Activated T-helper 2 cell treated with anti-CD3 and anti-CD28 coated beads, Interferon-gamma antibody, Interleukin-2, Interleukin-4, amounts not matched to agents 10 μg/mL and 5 μg/mL and 100 μg/mL, durations not matched to agents 14 hours and 24 hours and 36 hours (primary cell): ENCODE measurements at regions of chrX and their contacts with region 1.

Region 1: GRCh38 chrX:45758319-45758718 is 557.6 kb upstream of the DIPK2B start:
- DNase-seq: peak; percentile 38
- H3K4me3 Mint-ChIP-seq: peak overlapping the region; percentile 64
- H3K27ac Mint-ChIP-seq: peak overlapping the region; percentile 98
- H3K4me1 Mint-ChIP-seq: peaks cover 65% of the 10 kb centered on the region
- H3K27me3 Mint-ChIP-seq: no peaks in the 10 kb centered on the region

Region 2: GRCh38 chrX:45191383-45191782 is 566.9 kb before region 1 on chrX:
- intact Hi-C with region 1: no loop called
- DNase-seq: no peak
- H3K4me3 Mint-ChIP-seq: no peak overlapping the region
- H3K27ac Mint-ChIP-seq: no peak overlapping the region
- H3K4me1 Mint-ChIP-seq: peaks cover 18% of the 10 kb centered on the region
- H3K27me3 Mint-ChIP-seq: no peaks in the 10 kb centered on the region

Region 3: GRCh38 chrX:45505214-45505613 is 253.1 kb before region 1 on chrX:
- intact Hi-C with region 1: loop called (anchors 5 kb)
- DNase-seq: no peak
- H3K4me3 Mint-ChIP-seq: no peak overlapping the region
- H3K27ac Mint-ChIP-seq: no peak overlapping the region
- H3K4me1 Mint-ChIP-seq: peaks cover 14% of the 10 kb centered on the region
- H3K27me3 Mint-ChIP-seq: no peaks in the 10 kb centered on the region

Region 4: GRCh38 chrX:45621376-45622041 is 136.8 kb before region 1 on chrX:
- intact Hi-C with region 1: loop called (anchors 2 kb)
- DNase-seq: no peak
- H3K4me3 Mint-ChIP-seq: no peak overlapping the region
- H3K27ac Mint-ChIP-seq: peak overlapping the region; percentile 80
- H3K4me1 Mint-ChIP-seq: peaks cover 18% of the 10 kb centered on the region
- H3K27me3 Mint-ChIP-seq: no peaks in the 10 kb centered on the region

Region 5: DNA sequence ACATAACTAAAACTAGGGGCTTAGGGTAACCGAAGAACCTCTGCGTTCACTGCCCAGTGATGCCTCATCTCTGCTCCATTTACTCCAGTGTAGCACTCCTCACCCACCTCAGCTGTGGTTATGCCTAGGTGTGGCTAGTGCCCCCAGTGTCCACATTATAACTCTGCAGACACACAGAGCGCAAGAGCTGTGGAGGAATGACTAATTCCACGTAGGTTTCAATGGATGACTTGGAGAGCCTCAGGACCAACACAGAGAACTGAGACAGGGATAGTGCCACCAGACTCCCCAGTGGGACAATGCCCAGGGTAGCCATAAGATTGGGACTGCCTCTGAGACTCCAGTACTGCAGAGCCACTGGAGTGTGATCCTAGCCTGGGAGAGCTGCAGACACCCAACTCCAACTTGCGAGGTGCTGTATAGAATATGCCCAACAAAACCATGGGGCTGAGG is 15.2 kb before region 1 on chrX:
- intact Hi-C with region 1: no loop called
- DNase-seq: no peak
- H3K4me3 Mint-ChIP-seq: no peak overlapping the region
- H3K27ac Mint-ChIP-seq: no peak overlapping the region
- H3K4me1 Mint-ChIP-seq: peaks cover 14% of the 10 kb centered on the region
- H3K27me3 Mint-ChIP-seq: no peaks in the 10 kb centered on the region

Region 6: DNA sequence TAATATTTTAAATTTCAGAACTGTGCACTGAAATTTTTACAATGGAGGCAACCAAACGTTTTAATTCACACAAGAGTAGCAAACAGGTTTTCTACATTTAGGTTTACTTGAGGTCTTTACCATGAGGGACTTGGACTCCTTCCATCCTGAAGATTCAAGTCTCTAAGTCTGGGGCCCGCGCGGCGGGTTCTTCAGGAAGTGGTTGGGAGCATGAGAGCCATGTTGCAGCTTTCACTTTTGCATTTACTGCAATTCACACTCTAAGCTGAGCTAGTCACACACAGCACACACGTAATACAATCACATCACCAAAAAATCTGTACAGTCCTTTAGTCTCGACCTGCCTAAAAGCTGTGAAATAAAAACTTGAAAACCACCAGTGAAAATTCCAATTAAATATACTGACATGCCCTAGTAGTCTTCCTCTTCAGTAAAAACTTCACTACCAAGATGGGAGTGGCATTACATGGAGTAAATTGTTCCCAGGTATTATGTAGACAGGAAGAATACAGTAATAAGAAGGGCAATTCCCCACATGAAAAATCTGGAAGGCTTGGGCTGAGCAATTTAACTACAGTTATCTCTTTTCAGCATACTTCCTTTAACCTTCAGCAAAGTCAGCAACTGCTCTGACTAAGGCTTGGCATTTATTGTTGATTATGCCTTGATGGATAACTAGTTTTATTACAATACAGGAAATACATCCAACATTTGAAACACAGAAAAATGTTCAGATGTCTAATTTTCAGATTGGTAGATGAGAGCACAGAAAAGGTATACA is 13.4 kb after region 1 on chrX:
- intact Hi-C with region 1: loop called (anchors 1 kb)
- DNase-seq: peak; percentile 53
- H3K4me3 Mint-ChIP-seq: peak overlapping the region; percentile 80
- H3K27ac Mint-ChIP-seq: peak overlapping the region; percentile 94
- H3K4me1 Mint-ChIP-seq: peaks cover 60% of the 10 kb centered on the region
- H3K27me3 Mint-ChIP-seq: no peaks in the 10 kb centered on the region

Region 7: DNA sequence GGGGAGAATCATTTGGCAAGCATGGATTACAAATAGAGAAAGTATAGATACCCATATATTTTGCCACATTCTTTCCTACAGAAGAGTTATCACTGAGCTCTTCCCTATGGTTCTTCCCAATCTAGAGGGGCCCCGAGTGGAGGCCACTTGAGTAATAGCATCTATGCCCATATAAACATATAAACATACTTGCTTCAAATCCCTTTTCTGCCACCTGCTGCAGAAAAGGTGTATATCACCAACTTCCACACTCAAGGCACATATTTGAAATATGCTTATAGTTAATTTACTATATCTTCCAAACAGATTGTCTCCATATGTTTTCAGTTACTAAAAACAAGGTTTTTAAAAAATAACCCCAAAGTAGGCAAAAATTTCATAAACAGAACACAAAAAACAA is 85.2 kb after region 1 on chrX:
- intact Hi-C with region 1: no loop called
- DNase-seq: no peak
- H3K4me3 Mint-ChIP-seq: peak overlapping the region; percentile 47
- H3K27ac Mint-ChIP-seq: peak overlapping the region; percentile 91
- H3K4me1 Mint-ChIP-seq: peaks cover 41% of the 10 kb centered on the region
- H3K27me3 Mint-ChIP-seq: no peaks in the 10 kb centered on the region

Region 8: GRCh38 chrX:46325312-46325877 is 567.1 kb after region 1 on chrX:
- intact Hi-C with region 1: loop called (anchors 10 kb)
- DNase-seq: peak; percentile 10
- H3K4me3 Mint-ChIP-seq: no peak overlapping the region
- H3K27ac Mint-ChIP-seq: peak overlapping the region; percentile 69
- H3K4me1 Mint-ChIP-seq: peaks cover 52% of the 10 kb centered on the region
- H3K27me3 Mint-ChIP-seq: no peaks in the 10 kb centered on the region